ENCODE measurements at regions of chr3 and their contacts with region 1.

Region 1: GRCh38 chr3:129942296-129942695 is 32.2 kb upstream of the TRH start:
- DNase-seq: peak in 3 of 9 donors; percentile 14 to 18 (median 17)
- ATAC-seq: peak; percentile 78
- H3K4me3 ChIP-seq: no peak overlapping the region
- H3K4me3 Mint-ChIP-seq: no peak overlapping the region
- H3K27ac ChIP-seq: no peak overlapping the region
- H3K27ac Mint-ChIP-seq: peak overlapping the region in 1 of 9 donors; percentile 43
- H3K4me1 ChIP-seq: no peaks in the 10 kb centered on the region
- H3K4me1 Mint-ChIP-seq: peaks cover 0 to 3% (median 0%) of the 10 kb centered on the region in 7 donors
- H3K27me3 ChIP-seq: no peaks in the 10 kb centered on the region
- H3K27me3 Mint-ChIP-seq: peaks cover 0 to 15% (median 4%) of the 10 kb centered on the region in 5 donors

Region 2: DNA sequence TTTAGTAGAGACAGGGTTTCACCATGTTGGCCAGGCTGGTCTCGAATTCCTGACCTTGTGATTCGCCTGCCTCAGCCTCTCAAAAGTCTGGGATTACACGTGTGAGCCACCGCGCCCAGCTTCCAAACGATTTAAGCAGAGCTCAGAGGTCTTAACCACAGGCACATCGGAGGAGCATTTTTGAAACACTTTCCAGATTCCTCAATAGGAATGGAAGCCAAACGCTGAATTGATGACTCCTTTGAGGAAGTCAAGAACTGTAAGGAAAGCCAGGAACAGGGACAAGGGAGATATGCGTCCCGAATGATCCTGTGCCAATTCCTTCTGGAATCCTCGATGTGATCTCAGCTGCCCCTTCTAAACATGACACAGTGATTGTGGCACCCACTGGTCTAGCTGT is 72.2 kb after region 1 on chr3:
- CTCF ChIA-PET with region 1: no interaction called
- POLR2A ChIA-PET with region 1: no interaction called
- intact Hi-C with region 1: loop called in 1 of 2 experiments (anchors 10 kb)
- DNase-seq: no peak
- ATAC-seq: no peak
- H3K4me3 ChIP-seq: no peak overlapping the region
- H3K4me3 Mint-ChIP-seq: no peak overlapping the region
- H3K27ac ChIP-seq: no peak overlapping the region
- H3K27ac Mint-ChIP-seq: no peak overlapping the region
- H3K4me1 ChIP-seq: no peaks in the 10 kb centered on the region
- H3K4me1 Mint-ChIP-seq: peaks cover 0 to 2% (median 0%) of the 10 kb centered on the region in 7 donors
- H3K27me3 ChIP-seq: no peaks in the 10 kb centered on the region
- H3K27me3 Mint-ChIP-seq: peaks cover 4 to 13% (median 8%) of the 10 kb centered on the region in 5 donors

Measured in naive thymus-derived CD4-positive, alpha-beta T cell (primary cell).